ENCODE measurements at regions of chr1 and their contacts with region 1.

Region 1: DNA sequence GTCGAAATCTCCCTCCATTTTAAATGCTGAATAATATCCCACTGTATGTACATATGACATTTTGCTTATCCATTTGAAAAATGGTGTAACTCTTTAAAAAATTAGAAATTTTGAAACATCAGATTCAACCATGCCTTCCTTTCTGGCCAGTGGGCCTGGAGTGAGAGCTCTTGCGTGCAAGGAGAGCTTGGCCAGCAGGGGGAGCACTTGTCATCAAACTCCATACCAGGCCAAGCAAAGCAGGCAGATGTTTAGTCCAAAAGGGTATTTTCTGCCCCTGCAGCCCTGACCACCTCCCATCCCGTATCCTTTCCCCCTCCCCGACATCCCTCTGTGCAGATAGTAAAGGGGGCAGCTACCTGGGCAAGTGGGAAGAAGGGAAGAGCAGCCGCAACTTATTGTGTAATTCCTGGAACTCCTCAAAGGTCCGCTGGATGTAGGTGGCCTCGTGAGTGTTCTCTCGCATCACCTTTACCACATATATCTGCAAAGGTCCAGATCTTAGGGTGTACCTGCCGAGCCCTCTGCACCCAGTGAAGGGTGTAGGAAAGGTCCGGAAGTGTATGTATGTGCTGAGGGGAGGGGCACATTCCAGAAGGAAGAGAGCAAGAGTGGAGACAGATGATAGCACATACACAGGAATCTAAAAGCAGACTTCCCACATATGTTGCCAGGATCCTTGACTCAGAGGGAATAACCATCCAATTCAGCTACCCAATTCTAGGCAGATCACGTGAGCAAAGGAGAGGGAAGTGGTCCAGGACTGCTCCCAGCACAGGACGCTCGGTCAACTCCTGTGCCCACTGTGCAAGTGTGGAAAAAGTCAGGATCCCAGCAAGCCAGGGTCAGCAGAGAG is 19.9 kb upstream of the PPP1R15B start:
- DNase-seq: peak; percentile 80 to 91
- ATAC-seq: peak; percentile 57 to 73 (median 62)
- H3K4me3 ChIP-seq: no peak overlapping the region
- H3K27ac ChIP-seq: peak overlapping the region; percentile 34
- H3K4me1 ChIP-seq: peaks cover 37% of the 10 kb centered on the region
- H3K27me3 ChIP-seq: no peaks in the 10 kb centered on the region
- CTCF ChIP-seq: peak; percentile 87

Region 2: DNA sequence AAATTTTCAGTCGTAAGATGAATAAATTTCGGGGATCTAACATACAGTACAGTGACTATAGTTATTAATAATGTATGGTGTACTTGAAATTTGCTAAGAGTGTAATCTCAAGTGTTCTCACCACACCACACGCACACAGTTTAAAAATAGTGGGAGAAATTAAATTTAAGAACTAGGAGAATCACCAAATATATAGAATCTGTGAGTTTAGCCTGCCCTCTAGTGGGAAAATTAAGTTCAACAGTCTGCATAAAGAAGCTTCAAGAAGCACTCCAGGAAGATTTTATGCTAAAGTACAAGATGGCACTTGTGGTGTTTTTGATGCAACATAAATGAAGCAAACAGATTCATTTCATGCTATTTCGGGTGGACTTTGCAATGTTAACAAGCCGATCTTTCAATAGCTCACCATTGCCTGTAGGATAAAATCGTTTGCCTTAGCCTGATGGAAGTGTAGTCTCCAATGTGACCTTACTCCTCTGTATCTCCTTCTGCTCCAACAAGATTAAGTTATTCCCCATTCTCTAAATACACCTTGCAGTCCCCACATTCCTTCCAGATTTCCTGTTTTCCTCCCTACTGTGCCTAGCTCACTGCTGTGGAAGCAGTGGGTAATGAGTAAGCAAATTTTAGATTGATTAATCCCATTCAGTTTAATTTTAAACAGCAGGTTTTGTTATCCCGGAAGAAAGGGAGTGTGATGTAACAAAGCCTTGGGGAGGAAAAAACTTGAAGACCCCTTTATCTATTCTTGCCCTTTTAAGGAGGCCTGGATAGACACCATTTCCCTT is 71.8 kb after region 1 on chr1:
- intact Hi-C with region 1: loop called in 1 of 2 experiments (anchors 5 kb)
- DNase-seq: no peak
- ATAC-seq: peak in 1 of 4 donors; percentile 21
- H3K4me3 ChIP-seq: no peak overlapping the region
- H3K27ac ChIP-seq: no peak overlapping the region
- H3K4me1 ChIP-seq: peaks cover 16% of the 10 kb centered on the region
- H3K27me3 ChIP-seq: no peaks in the 10 kb centered on the region
- CTCF ChIP-seq: peak; percentile 87

Region 3: GRCh38 chr1:204706838-204707509 is 275.4 kb after region 1 on chr1:
- intact Hi-C with region 1: no loop called
- DNase-seq: no peak
- ATAC-seq: no peak
- H3K4me3 ChIP-seq: no peak overlapping the region
- H3K27ac ChIP-seq: no peak overlapping the region
- H3K4me1 ChIP-seq: no peaks in the 10 kb centered on the region
- H3K27me3 ChIP-seq: peaks cover 0 to 9% (median 0%) of the 10 kb centered on the region in 3 donors
- CTCF ChIP-seq: no peak

Measured in psoas muscle (tissue), 8 donors.